ENCODE measurements at regions of chr1 and their contacts with region 1.

Region 1: DNA sequence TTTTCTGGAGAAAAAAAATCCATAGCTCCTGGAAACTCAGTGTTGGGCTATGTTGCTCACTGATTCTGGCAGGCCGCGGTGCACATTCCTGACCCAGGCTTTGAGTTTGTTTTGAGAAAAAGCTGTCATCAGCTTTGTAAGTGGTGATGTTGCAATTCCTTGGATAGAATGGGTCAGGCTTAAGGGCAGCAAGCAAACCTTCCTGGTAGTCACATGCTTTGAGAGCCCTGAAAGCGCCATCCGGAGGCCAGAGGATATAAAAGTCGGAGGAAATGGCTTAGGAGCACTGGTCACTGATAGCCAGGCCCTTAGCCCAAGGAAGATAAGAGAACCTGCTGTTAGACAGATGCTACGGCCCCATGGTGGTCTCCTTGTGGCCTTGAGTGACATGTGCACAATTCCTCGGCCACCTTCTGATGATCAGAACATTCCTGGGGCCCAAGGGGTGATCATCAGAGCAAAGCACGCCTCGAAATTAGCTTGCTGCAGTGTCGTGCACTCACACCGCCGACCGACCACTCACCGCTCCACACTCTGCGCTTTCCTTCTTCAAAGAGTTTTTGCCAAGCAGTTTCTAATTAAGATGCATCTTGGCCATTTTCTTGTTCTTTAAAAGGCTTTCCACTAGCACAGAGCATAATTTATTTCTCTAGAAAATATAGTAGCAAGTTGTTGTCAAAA is 78.6 kb downstream of the MAN1C1 start:
- DNase-seq: peak; percentile 88
- ATAC-seq: peak; percentile 83

Region 2: GRCh38 chr1:25743826-25744581 is 48.8 kb after region 1 on chr1:
- intact Hi-C with region 1: loop called (anchors 5 kb)
- DNase-seq: peak; percentile 80
- ATAC-seq: peak; percentile 89